ENCODE measurements at regions of chr1 and their contacts with region 1.

Region 1: GRCh38 chr1:203625628-203626019 is 1.0 kb upstream of the ATP2B4 start:
- DNase-seq: no peak
- H3K4me3 ChIP-seq: peak overlapping the region in 3 of 4 donors; percentile 76 to 87 (median 80)
- H3K27ac ChIP-seq: peak overlapping the region; percentile 91 to 95 (median 94)
- H3K4me1 ChIP-seq: peaks cover 25 to 45% (median 35%) of the 10 kb centered on the region in 4 donors
- H3K27me3 ChIP-seq: no peaks in the 10 kb centered on the region
- CTCF ChIP-seq: peak; percentile 39 to 59 (median 42)
- EP300 ChIP-seq: no peak
- POLR2A ChIP-seq: no peak

Region 2: GRCh38 chr1:202834771-202835547 is 790.7 kb before region 1 on chr1:
- intact Hi-C with region 1: no loop called
- DNase-seq: no peak
- H3K4me3 ChIP-seq: no peak overlapping the region
- H3K27ac ChIP-seq: no peak overlapping the region
- H3K4me1 ChIP-seq: no peaks in the 10 kb centered on the region
- H3K27me3 ChIP-seq: no peaks in the 10 kb centered on the region
- CTCF ChIP-seq: no peak
- EP300 ChIP-seq: no peak
- POLR2A ChIP-seq: no peak

Region 3: DNA sequence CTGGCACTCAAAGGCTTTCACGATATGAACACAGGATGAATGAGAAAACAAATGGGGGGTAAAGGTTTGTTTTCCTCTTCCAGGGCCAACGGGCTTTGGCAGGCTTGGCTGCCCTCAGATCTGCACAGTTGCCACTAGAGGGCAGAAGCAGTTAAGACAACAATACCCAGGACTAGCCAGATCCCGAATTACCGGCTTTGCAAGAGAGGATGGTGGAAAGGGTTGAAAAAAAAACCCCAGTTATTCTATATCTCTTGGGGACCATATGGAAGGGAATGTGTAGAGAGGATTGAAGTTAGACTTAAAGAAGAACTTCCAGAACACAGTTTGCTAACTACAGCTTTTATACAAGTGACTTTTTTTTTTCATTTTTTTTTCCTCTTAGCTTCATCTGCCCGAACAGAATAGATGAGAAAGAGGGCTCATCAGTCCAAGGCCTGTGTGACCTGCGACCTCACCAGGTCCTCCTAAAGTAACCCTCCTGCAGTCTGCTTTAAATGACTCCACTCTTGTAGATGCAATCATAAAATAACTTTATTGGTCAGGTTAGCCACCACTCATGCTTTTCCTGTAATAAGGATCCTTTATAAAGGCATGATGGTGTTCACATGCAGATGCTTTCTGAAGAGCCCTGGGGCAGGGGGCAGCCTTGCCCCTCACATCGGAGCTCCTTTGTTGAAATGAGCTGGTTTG is 285.4 kb before region 1 on chr1:
- intact Hi-C with region 1: loop called (anchors 10 kb)
- DNase-seq: no peak
- H3K4me3 ChIP-seq: no peak overlapping the region
- H3K27ac ChIP-seq: peak overlapping the region in 1 of 4 donors; percentile 2
- H3K4me1 ChIP-seq: peaks cover 3 to 42% (median 32%) of the 10 kb centered on the region in 4 donors
- H3K27me3 ChIP-seq: no peaks in the 10 kb centered on the region
- CTCF ChIP-seq: peak; percentile 89 to 96 (median 90)
- EP300 ChIP-seq: no peak
- POLR2A ChIP-seq: no peak

Region 4: DNA sequence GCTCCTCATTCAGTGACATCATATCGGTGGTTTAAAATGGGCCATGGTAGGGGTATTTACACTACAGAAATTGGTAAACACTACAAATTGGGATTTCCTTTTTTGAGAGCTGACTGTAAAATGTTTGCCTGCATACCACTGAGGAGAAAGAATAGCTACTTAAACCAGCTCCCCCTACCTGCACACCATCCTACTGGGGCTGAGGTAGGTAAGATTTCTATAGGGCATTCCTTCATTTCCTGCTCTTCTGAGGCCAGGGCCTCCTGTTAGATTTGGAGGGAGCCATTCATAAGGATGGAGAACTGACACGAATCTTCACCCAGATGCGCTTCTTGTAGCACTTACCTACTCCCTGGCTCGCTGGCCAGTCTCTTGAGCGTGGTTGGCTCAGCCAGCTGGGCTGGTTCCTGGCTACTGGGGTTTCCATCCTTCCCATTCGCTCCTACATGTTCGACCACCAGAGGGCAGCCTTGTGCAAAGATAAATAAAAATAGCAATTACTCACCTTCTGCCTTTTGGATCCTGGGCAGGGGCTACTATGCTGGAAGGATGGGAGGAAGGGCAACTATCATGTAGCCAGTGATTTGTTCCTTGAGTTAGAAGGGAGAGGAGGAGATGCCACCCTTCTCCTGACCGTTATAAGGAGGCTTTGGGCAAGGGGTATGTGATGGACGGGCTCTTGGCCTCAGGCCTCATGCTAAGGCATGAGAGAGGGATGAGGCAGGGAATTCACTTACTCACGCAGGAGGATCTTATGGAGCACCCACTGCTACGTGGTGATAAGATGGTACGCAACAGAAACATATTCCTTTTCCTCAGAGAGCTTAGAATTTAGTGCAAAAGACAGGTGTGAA is 121.0 kb before region 1 on chr1:
- intact Hi-C with region 1: loop called (anchors 5 kb)
- DNase-seq: peak; percentile 96
- H3K4me3 ChIP-seq: no peak overlapping the region
- H3K27ac ChIP-seq: peak overlapping the region in 3 of 4 donors; percentile 79 to 88 (median 88)
- H3K4me1 ChIP-seq: peaks cover 35 to 68% (median 60%) of the 10 kb centered on the region in 4 donors
- H3K27me3 ChIP-seq: no peaks in the 10 kb centered on the region
- CTCF ChIP-seq: peak; percentile 90 to 93 (median 93)
- EP300 ChIP-seq: no peak
- POLR2A ChIP-seq: no peak

Region 5: DNA sequence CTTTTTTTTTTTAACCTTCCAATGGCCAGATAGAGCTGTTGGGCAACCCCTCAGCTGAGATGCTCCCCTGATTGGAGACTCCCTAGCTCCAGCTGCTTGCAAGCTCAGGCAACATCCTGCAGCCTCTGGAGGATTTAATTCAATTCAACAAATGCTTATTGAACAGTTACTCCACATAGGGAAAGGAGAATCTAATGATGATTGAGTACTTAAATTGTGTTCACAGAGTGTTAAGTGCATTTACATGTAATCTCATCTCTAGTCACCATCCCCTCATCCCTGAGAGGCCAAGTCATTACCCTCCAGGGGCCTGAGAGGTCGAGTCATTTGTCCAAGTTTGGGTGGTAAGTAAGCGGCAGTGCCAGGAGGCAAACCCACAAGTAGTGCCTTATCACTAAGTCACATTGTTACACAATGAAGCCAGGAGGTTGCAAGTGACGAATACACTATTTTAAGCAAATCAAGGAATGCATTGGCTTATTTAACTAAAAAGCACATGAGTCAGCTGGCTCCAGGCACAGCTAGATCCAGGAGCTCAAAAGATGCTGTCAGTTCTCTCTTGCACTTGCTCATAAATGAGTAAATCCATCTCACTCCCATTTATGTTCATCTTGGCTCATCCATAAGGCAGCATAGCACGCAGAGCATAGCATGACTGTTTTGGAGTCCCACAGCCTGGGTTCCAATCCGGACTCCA is 67.4 kb before region 1 on chr1:
- intact Hi-C with region 1: loop called (anchors 5 kb)
- DNase-seq: no peak
- H3K4me3 ChIP-seq: no peak overlapping the region
- H3K27ac ChIP-seq: peak overlapping the region; percentile 85 to 94 (median 91)
- H3K4me1 ChIP-seq: peaks cover 51 to 76% (median 66%) of the 10 kb centered on the region in 4 donors
- H3K27me3 ChIP-seq: no peaks in the 10 kb centered on the region
- CTCF ChIP-seq: no peak
- EP300 ChIP-seq: peak; percentile 58
- POLR2A ChIP-seq: no peak

Region 6: DNA sequence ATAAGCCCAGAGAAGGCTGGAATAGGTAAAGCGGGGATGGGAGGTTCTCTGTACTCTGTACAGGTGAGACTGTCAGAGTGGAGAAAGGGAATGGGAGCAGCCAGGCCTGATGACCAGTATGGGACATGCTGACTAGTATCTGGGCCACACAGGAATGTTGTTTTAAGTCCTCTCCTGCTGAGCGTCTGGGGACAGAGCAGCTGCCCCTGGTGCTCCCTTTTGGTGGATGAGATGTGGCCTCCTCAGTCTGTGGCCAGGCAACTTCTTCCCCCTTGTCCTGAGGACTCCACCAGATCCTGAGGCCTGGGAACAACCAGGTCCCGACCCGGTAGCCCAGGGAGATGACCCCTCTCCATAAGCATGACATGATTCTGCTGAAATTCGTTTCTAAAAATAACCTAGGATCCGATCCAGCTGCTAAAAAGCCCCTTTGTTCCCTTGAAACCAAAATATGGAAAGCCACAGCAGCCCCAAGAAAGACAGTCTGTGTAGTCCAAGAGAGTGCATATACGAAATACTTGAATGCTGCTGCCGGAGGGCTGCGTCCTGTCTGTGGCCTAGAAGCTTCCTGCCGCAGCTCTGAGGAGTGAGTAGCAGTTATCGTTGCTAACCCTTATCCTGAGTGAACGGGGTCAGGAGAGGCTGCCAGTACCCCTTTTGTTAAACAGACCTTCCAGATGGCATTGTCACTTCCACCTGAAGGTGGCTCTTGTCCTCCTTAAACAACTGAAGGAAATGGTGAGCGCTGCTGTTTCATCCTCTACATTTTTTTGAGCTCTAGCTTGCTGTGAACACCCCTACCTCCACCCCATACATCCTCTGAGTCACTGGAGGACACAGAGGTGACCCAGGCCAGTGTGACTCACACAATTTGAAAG is 48.2 kb after region 1 on chr1:
- intact Hi-C with region 1: loop called (anchors 5 kb)
- DNase-seq: no peak
- H3K4me3 ChIP-seq: peak overlapping the region in 2 of 4 donors; percentile 5 to 19
- H3K27ac ChIP-seq: peak overlapping the region; percentile 81 to 95 (median 91)
- H3K4me1 ChIP-seq: peaks cover 88 to 100% (median 100%) of the 10 kb centered on the region in 4 donors
- H3K27me3 ChIP-seq: no peaks in the 10 kb centered on the region
- CTCF ChIP-seq: peak in 2 of 3 experiments; percentile 23 to 26
- EP300 ChIP-seq: no peak
- POLR2A ChIP-seq: no peak

Region 7: GRCh38 chr1:203702130-203702577 is 76.5 kb after region 1 on chr1:
- intact Hi-C with region 1: loop called (anchors 2 kb)
- DNase-seq: no peak
- H3K4me3 ChIP-seq: no peak overlapping the region
- H3K27ac ChIP-seq: peak overlapping the region; percentile 63 to 91 (median 86)
- H3K4me1 ChIP-seq: peaks cover 5 to 67% (median 46%) of the 10 kb centered on the region in 4 donors
- H3K27me3 ChIP-seq: no peaks in the 10 kb centered on the region
- CTCF ChIP-seq: peak; percentile 77 to 93 (median 79)
- EP300 ChIP-seq: no peak
- POLR2A ChIP-seq: no peak